ENCODE measurements at regions of chr1 and their contacts with region 1.

Region 1: GRCh38 chr1:110460253-110461220 is 9.6 kb downstream of the PROK1 start:
- DNase-seq: peak; percentile 74 to 90 (median 83)
- ATAC-seq: peak; percentile 99
- H3K4me3 ChIP-seq: no peak overlapping the region
- H3K4me3 Mint-ChIP-seq: no peak overlapping the region
- H3K27ac ChIP-seq: no peak overlapping the region
- H3K27ac Mint-ChIP-seq: no peak overlapping the region
- H3K4me1 ChIP-seq: no peaks in the 10 kb centered on the region
- H3K4me1 Mint-ChIP-seq: no peaks in the 10 kb centered on the region
- H3K27me3 ChIP-seq: no peaks in the 10 kb centered on the region
- H3K27me3 Mint-ChIP-seq: no peaks in the 10 kb centered on the region
- CTCF ChIP-seq: peak; percentile 98

Region 2: GRCh38 chr1:110034451-110035235 is 425.9 kb before region 1 on chr1 and contains the start of gene STRIP1:
- CTCF ChIA-PET with region 1: interaction called, 16 read pairs
- POLR2A ChIA-PET with region 1: no interaction called
- intact Hi-C with region 1: loop called in 1 of 2 experiments (anchors 2 kb)
- DNase-seq: peak; percentile 83 to 97 (median 90)
- ATAC-seq: peak; percentile 94
- H3K4me3 ChIP-seq: peak within 1 kb of the TSS; percentile 77 to 89
- H3K4me3 Mint-ChIP-seq: peak within 1 kb of the TSS; percentile 98
- H3K27ac ChIP-seq: peak within 1 kb of the TSS; percentile 74 to 84
- H3K27ac Mint-ChIP-seq: peak within 1 kb of the TSS; percentile 96
- H3K4me1 ChIP-seq: peaks cover 36% of the 10 kb centered on the region
- H3K4me1 Mint-ChIP-seq: peaks cover 53% of the 10 kb centered on the region
- H3K27me3 ChIP-seq: no peaks in the 10 kb centered on the region
- H3K27me3 Mint-ChIP-seq: no peaks in the 10 kb centered on the region
- CTCF ChIP-seq: no peak
- total RNA-seq, gene STRIP1: 94.6 to 109 TPM

Region 3: DNA sequence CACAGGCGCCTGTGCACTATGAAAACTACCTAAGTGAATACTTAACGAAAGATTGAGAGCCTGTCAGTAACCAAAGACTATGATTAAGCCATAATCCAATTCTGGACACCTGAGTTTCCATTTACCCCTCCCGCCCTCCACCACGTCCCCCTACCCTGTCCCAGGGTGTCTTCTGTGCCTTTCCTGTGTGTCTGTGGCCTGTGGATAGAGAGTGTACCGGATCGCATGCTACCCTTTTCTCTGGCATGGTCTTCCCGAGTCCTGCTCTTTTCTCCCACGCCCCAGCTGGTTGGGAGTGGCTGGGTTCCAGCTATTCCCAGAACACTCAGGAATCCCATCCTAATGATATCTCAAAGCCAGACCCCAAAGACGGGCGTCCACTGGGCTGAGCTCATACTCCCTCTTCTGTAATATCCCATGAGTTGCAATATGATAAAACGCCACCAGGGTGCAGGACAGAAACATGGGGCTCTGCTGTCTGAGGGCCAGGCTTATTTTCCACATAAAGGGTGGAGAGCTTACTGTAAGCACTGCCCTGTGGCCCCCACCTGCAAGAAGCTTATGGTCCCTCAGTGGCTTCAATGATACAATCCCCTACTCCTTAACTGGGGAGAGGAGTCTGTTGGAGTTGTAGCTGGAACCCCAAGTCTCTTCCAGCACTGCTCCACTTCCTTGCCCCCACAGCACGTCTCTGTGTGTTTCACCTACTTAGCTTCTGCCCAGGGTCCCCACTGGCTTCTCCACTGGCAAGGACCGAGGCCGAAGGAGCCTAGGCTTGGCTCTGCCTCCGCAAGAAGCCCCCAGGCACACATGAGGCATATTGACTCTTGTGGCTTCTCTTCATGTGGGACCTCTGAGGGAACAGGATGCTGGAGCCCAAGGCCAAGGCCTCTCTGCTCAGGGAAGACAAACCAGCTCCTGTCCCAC is 372.5 kb before region 1 on chr1:
- CTCF ChIA-PET with region 1: interaction called, 12 read pairs
- POLR2A ChIA-PET with region 1: no interaction called
- intact Hi-C with region 1: loop called in 1 of 2 experiments (anchors 1 kb)
- DNase-seq: peak in 4 of 9 experiments; percentile 34 to 62 (median 54)
- ATAC-seq: peak; percentile 77
- H3K4me3 ChIP-seq: no peak overlapping the region
- H3K4me3 Mint-ChIP-seq: no peak overlapping the region
- H3K27ac ChIP-seq: no peak overlapping the region
- H3K27ac Mint-ChIP-seq: no peak overlapping the region
- H3K4me1 ChIP-seq: peaks cover 8% of the 10 kb centered on the region
- H3K4me1 Mint-ChIP-seq: peaks cover 13% of the 10 kb centered on the region
- H3K27me3 ChIP-seq: peaks cover 7 to 12% of the 10 kb centered on the region in 2 experiments
- H3K27me3 Mint-ChIP-seq: peaks cover 43% of the 10 kb centered on the region
- CTCF ChIP-seq: peak; percentile 68

Region 4: DNA sequence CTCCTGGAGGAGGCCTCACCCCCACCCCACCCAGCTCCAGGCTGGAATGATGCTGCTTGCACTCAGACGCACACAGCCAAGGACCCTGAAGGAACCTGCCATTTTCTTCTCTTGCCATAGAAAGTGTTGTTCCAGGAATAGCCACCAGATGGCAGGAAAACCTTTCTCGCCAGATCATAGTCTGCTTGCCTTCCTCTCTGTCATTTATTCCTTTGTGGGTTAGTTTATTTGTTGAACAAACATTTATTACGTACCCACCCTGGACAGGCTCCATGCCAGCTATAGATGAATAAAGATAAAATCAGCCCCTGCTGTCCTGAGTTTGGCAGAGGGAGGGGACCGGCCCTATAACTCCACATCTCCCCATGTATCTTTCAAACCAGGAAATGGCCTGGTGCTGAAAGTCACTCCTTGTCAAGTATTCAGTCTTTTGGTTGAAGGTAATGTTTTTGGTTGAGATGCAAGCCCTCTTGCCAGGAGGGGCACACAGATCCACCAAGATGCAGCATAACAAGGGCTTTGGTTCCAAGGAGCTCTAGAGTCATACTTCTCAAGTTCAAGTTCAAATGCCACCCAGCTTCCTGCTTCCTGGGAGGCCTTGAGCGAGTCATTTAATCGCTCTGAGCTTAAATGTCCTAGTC is 257.4 kb before region 1 on chr1:
- CTCF ChIA-PET with region 1: interaction called, 313 read pairs
- POLR2A ChIA-PET with region 1: interaction called, 3 read pairs
- intact Hi-C with region 1: loop called (anchors 1 kb)
- DNase-seq: peak; percentile 43 to 86 (median 68)
- ATAC-seq: peak; percentile 80
- H3K4me3 ChIP-seq: no peak overlapping the region
- H3K4me3 Mint-ChIP-seq: no peak overlapping the region
- H3K27ac ChIP-seq: peak overlapping the region in 1 of 2 experiments; percentile 64
- H3K27ac Mint-ChIP-seq: peak overlapping the region; percentile 90
- H3K4me1 ChIP-seq: peaks cover 22% of the 10 kb centered on the region
- H3K4me1 Mint-ChIP-seq: peaks cover 25% of the 10 kb centered on the region
- H3K27me3 ChIP-seq: no peaks in the 10 kb centered on the region
- H3K27me3 Mint-ChIP-seq: no peaks in the 10 kb centered on the region
- CTCF ChIP-seq: peak; percentile 82

Region 5: DNA sequence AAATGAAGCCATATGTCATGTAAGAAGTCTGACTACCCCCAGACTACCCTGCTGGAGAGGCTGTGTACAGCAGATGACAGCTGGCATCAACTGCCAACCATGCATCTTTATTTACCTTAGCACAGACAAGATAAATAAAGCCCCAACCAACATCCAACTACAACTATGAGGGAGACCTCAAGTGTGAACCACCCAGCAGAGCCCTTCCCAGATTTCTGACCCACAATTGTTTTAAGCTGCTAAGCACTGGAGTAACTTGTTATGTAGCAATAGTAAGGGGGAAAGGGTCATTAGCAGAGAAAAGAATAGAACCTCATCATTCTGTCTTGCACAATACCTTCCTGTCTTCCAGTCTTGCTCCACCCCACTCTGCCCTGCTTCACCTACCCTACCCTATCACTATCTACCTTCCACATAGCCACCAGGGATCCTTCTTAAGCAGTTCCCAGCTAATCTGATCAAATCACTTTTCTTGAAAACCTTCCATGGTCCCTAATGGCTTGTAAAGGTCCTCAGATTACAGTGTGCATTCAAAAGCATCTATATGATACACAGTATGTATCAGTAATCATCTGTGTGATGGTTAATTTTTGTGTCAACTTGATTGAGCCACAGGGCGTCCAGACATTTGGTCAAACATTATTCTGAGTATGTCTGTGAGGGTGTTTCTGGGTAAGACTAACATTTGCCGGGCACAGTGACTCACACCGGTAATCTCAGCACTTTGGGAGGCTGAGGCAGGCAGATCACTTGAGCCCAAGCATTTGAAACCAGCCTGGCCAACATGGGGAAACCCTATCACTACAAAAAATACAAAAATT is 141.0 kb before region 1 on chr1:
- CTCF ChIA-PET with region 1: interaction called, 30 read pairs
- POLR2A ChIA-PET with region 1: no interaction called
- intact Hi-C with region 1: no loop called
- DNase-seq: no peak
- ATAC-seq: no peak
- H3K4me3 ChIP-seq: no peak overlapping the region
- H3K4me3 Mint-ChIP-seq: no peak overlapping the region
- H3K27ac ChIP-seq: no peak overlapping the region
- H3K27ac Mint-ChIP-seq: no peak overlapping the region
- H3K4me1 ChIP-seq: no peaks in the 10 kb centered on the region
- H3K4me1 Mint-ChIP-seq: no peaks in the 10 kb centered on the region
- H3K27me3 ChIP-seq: no peaks in the 10 kb centered on the region
- H3K27me3 Mint-ChIP-seq: no peaks in the 10 kb centered on the region
- CTCF ChIP-seq: no peak

Region 6: GRCh38 chr1:110347182-110347893 is 113.2 kb before region 1 on chr1:
- CTCF ChIA-PET with region 1: no interaction called
- POLR2A ChIA-PET with region 1: no interaction called
- intact Hi-C with region 1: no loop called
- DNase-seq: no peak
- ATAC-seq: no peak
- H3K4me3 ChIP-seq: no peak overlapping the region
- H3K4me3 Mint-ChIP-seq: no peak overlapping the region
- H3K27ac ChIP-seq: no peak overlapping the region
- H3K27ac Mint-ChIP-seq: no peak overlapping the region
- H3K4me1 ChIP-seq: peaks cover 55% of the 10 kb centered on the region
- H3K4me1 Mint-ChIP-seq: peaks cover 90% of the 10 kb centered on the region
- H3K27me3 ChIP-seq: no peaks in the 10 kb centered on the region
- H3K27me3 Mint-ChIP-seq: no peaks in the 10 kb centered on the region
- CTCF ChIP-seq: no peak

Region 7: GRCh38 chr1:110407260-110408210 is 53.0 kb before region 1 on chr1 and contains the start of gene LAMTOR5:
- CTCF ChIA-PET with region 1: interaction called, 89 read pairs
- POLR2A ChIA-PET with region 1: interaction called, 3 read pairs
- intact Hi-C with region 1: loop called (anchors 1 kb)
- DNase-seq: peak; percentile 83 to 95 (median 89)
- ATAC-seq: peak; percentile 93
- H3K4me3 ChIP-seq: peak within 1 kb of the TSS; percentile 92 to 99
- H3K4me3 Mint-ChIP-seq: peak within 1 kb of the TSS; percentile 99
- H3K27ac ChIP-seq: peak within 1 kb of the TSS; percentile 91 to 92
- H3K27ac Mint-ChIP-seq: peak within 1 kb of the TSS; percentile 99
- H3K4me1 ChIP-seq: peaks cover 23% of the 10 kb centered on the region
- H3K4me1 Mint-ChIP-seq: peaks cover 29% of the 10 kb centered on the region
- H3K27me3 ChIP-seq: no peaks in the 10 kb centered on the region
- H3K27me3 Mint-ChIP-seq: no peaks in the 10 kb centered on the region
- CTCF ChIP-seq: no peak
- total RNA-seq, gene LAMTOR5: 106 to 109 TPM

Region 8: DNA sequence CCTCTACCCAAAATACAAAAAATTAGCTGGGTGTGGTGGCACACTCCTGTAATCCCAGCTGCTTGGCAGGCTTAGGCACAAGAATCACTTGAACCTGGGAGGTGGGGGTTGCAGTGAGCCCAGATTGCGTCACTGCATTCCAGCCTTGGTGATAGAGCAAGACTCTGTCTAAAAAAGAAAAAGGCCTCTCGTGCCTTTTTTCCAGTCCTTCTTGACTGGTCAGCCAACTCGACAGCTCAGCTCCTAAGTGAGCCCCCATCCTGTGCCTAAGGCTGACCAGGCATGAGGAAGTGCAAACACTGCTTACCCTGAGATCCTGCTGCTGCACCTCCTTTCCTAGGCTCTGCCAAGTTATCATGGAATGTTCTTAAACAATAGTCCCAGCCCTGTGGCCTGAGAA is 19.7 kb before region 1 on chr1:
- CTCF ChIA-PET with region 1: interaction called, 24 read pairs
- POLR2A ChIA-PET with region 1: no interaction called
- intact Hi-C with region 1: no loop called
- DNase-seq: no peak
- ATAC-seq: no peak
- H3K4me3 ChIP-seq: no peak overlapping the region
- H3K4me3 Mint-ChIP-seq: no peak overlapping the region
- H3K27ac ChIP-seq: no peak overlapping the region
- H3K27ac Mint-ChIP-seq: no peak overlapping the region
- H3K4me1 ChIP-seq: no peaks in the 10 kb centered on the region
- H3K4me1 Mint-ChIP-seq: no peaks in the 10 kb centered on the region
- H3K27me3 ChIP-seq: no peaks in the 10 kb centered on the region
- H3K27me3 Mint-ChIP-seq: peaks cover 4% of the 10 kb centered on the region
- CTCF ChIP-seq: no peak